Heart left ventricle (tissue), 16 donors: ENCODE measurements at regions of chr3 and their contacts with region 1.

Region 1: GRCh38 chr3:138915503-138916498 is 31.1 kb downstream of the FOXL2 start:
- DNase-seq: peak; percentile 91 to 97 (median 94)
- ATAC-seq: peak; percentile 97 to 98 (median 98)
- H3K4me3 ChIP-seq: peak overlapping the region; percentile 57 to 90 (median 84)
- H3K27ac ChIP-seq: peak overlapping the region; percentile 82 to 98 (median 96)
- H3K4me1 ChIP-seq: peaks cover 0 to 16% (median 6%) of the 10 kb centered on the region in 12 donors
- H3K27me3 ChIP-seq: no peaks in the 10 kb centered on the region
- CTCF ChIP-seq: peak; percentile 78 to 97 (median 87)
- POLR2A ChIP-seq: peak in 1 of 2 donors; percentile 29

Region 2: DNA sequence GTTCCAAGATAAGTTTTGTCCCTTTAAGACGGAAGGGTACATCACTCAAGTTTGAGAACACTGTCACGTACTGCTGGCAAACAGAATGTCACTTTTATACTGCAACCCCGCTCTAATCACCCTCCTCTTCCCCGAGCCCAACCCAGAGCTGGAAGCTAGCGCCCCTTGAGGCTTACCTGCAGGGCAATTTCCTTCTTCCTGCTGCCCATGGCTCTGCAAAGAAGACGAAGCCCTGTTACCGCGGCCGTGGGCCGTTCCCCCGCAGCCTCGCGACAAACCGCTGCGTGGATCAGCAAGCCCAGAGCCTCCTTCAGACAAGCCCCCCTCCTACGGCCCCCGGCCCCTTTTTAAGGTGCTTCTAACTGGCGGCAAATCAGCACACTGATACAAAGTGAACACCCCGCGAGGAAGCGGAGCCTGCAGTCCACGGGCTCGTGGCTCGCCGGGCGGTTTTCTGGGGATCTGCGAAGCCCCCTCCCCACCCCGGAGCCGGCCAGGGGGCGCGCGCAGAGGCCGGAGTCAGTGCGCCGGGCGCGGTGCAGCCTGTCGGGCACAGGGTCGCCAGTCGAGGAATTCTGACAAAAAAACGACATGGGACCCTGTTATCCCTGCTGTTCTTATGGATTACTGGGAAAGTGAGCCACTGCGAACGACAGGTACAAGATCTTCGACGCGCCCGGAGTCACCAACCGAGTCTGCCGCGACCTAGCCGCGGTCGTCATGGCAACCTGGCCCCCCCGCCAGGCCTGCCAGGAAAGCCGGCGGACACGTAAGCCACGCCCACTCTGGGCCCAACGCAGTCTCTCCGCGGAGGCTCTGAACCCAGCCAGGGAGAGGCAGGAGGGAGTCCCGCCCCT is 586.4 kb before region 1 on chr3 and contains the start of gene NME9:
- intact Hi-C with region 1: loop called in 1 of 10 experiments (anchors 10 kb)
- DNase-seq: peak; percentile 89 to 94 (median 92)
- ATAC-seq: peak; percentile 94 to 98 (median 96)
- H3K4me3 ChIP-seq: peak within 1 kb of the TSS; percentile 47 to 72 (median 66)
- H3K27ac ChIP-seq: peak within 1 kb of the TSS in 9 of 12 donors; percentile 16 to 69 (median 53)
- H3K4me1 ChIP-seq: peaks cover 0 to 18% (median 9%) of the 10 kb centered on the region in 12 donors
- H3K27me3 ChIP-seq: no peaks in the 10 kb centered on the region
- CTCF ChIP-seq: peak; percentile 17 to 62 (median 42)
- POLR2A ChIP-seq: no peak
- total RNA-seq, gene NME9: not detected

Region 3: GRCh38 chr3:138608322-138609135 is 307.3 kb before region 1 on chr3 and contains the start of gene FAIM:
- intact Hi-C with region 1: loop called in 1 of 10 experiments (anchors 5 kb)
- DNase-seq: peak; percentile 60 to 86 (median 71)
- ATAC-seq: peak; percentile 65 to 88 (median 86)
- H3K4me3 ChIP-seq: peak within 1 kb of the TSS; percentile 64 to 94 (median 84)
- H3K27ac ChIP-seq: peak within 1 kb of the TSS; percentile 89 to 99 (median 96)
- H3K4me1 ChIP-seq: peaks cover 0 to 15% (median 7%) of the 10 kb centered on the region in 12 donors
- H3K27me3 ChIP-seq: peaks cover 0 to 3% (median 0%) of the 10 kb centered on the region in 9 donors
- CTCF ChIP-seq: no peak
- POLR2A ChIP-seq: no peak
- total RNA-seq, gene FAIM: 2.0 to 5.9 (median 3.6) TPM

Region 4: GRCh38 chr3:138774529-138775253 is 141.1 kb before region 1 on chr3:
- intact Hi-C with region 1: loop called in 1 of 10 experiments (anchors 5 kb)
- DNase-seq: peak in 4 of 5 donors; percentile 62 to 74 (median 70)
- ATAC-seq: peak; percentile 85 to 96 (median 94)
- H3K4me3 ChIP-seq: no peak overlapping the region
- H3K27ac ChIP-seq: peak overlapping the region; percentile 37 to 79 (median 59)
- H3K4me1 ChIP-seq: peaks cover 9 to 41% (median 22%) of the 10 kb centered on the region in 12 donors
- H3K27me3 ChIP-seq: no peaks in the 10 kb centered on the region
- CTCF ChIP-seq: peak in 1 of 12 donors; percentile 7
- POLR2A ChIP-seq: no peak

Region 5: DNA sequence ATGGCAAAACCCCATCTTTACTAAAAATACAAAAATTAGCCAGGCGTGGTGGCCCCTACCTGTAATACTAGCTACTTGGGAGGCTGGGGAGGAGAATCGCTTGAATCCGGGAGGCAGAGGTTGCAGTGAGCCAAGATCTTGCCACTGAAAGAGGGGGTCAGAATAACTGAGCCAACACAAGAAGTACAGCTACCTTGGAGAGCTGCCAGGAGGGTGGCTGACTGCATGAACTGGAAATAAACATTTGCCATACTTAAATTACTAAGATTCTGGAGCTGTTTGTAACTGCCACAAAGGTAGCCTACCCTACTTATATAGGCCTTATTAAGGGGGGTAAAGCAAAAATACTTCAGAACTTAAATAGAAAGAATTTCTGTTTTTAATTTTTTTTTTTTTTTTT is 65.7 kb before region 1 on chr3:
- intact Hi-C with region 1: loop called in 1 of 10 experiments (anchors 5 kb)
- DNase-seq: peak in 4 of 5 donors; percentile 35 to 66 (median 42)
- ATAC-seq: no peak
- H3K4me3 ChIP-seq: no peak overlapping the region
- H3K27ac ChIP-seq: no peak overlapping the region
- H3K4me1 ChIP-seq: peaks cover 0 to 19% (median 0%) of the 10 kb centered on the region in 12 donors
- H3K27me3 ChIP-seq: no peaks in the 10 kb centered on the region
- CTCF ChIP-seq: no peak
- POLR2A ChIP-seq: no peak

Region 6: GRCh38 chr3:138935848-138936740 is 20.3 kb after region 1 on chr3:
- intact Hi-C with region 1: no loop called
- DNase-seq: peak; percentile 65 to 89 (median 74)
- ATAC-seq: peak; percentile 25 to 87 (median 76)
- H3K4me3 ChIP-seq: peak overlapping the region in 11 of 12 donors; percentile 3 to 50 (median 39)
- H3K27ac ChIP-seq: no peak overlapping the region
- H3K4me1 ChIP-seq: peaks cover 0 to 46% (median 38%) of the 10 kb centered on the region in 12 donors
- H3K27me3 ChIP-seq: peaks cover 44 to 68% (median 53%) of the 10 kb centered on the region in 9 donors
- CTCF ChIP-seq: peak; percentile 88 to 97 (median 95)
- POLR2A ChIP-seq: no peak

Region 7: GRCh38 chr3:139101396-139101795 is 185.6 kb after region 1 on chr3:
- intact Hi-C with region 1: no loop called
- DNase-seq: no peak
- ATAC-seq: no peak
- H3K4me3 ChIP-seq: no peak overlapping the region
- H3K27ac ChIP-seq: no peak overlapping the region
- H3K4me1 ChIP-seq: no peaks in the 10 kb centered on the region
- H3K27me3 ChIP-seq: peaks cover 0 to 14% (median 0%) of the 10 kb centered on the region in 9 donors
- CTCF ChIP-seq: no peak
- POLR2A ChIP-seq: no peak